ENCODE measurements at regions of chr22 and their contacts with region 1.

Region 1: GRCh38 chr22:22520020-22520656 is at the start of gene ZNF280A:
- DNase-seq: peak; percentile 28

Region 2: GRCh38 chr22:22508274-22509176 is 11.6 kb before region 1 on chr22 and contains the start of gene ZNF280B:
- CTCF ChIA-PET with region 1: interaction called, 5 read pairs
- POLR2A ChIA-PET with region 1: interaction called, 11 read pairs
- DNase-seq: peak; percentile 97